ENCODE measurements at regions of chr19 and their contacts with region 1.

Region 1: DNA sequence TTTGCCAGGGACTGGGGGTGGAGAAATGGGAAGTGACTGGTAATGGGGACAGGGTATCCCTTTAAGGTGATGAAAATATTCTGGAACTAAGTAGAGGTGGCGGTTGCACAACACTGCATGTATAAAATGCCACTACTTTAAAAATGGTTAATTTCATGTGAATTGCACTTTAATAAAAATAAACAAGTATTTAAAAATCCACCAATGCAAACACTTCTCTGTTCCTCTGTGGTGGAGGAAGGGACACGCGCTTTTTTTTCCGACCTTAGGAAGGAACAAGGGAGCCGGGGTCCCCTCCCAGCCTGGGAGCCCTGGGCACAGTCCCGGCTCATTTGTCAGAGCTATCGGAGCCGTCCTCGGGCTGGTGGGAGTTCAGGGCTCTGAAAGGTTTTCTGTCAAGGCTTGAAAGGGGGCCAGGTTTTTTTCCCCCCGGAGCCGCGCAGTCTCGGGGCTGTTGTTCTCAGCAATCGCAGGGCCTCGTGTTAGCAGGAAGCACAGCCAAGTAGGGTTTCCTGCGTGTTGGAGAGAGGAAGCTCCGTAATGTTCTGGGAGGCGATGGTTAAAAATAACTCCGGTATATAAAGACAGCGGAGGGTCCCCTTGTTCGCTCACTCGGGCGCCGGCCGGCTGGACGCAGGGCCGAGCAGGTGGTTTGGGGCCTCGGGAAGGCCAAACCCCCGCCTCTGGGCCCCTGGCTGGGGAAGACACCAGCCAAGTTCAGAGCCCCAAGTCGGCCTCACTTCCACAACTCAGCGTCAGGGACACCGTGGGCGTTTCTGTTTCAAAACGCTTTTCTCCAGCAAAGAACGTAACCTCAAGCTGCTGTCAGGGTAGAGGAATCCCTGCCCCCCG is 41.2 kb upstream of the KLF2 start:
- DNase-seq: no peak
- H3K4me3 ChIP-seq: no peak overlapping the region
- H3K27ac ChIP-seq: no peak overlapping the region
- H3K4me1 ChIP-seq: peaks cover 5% of the 10 kb centered on the region
- H3K27me3 ChIP-seq: peaks cover 35% of the 10 kb centered on the region
- CTCF ChIP-seq: no peak

Region 2: DNA sequence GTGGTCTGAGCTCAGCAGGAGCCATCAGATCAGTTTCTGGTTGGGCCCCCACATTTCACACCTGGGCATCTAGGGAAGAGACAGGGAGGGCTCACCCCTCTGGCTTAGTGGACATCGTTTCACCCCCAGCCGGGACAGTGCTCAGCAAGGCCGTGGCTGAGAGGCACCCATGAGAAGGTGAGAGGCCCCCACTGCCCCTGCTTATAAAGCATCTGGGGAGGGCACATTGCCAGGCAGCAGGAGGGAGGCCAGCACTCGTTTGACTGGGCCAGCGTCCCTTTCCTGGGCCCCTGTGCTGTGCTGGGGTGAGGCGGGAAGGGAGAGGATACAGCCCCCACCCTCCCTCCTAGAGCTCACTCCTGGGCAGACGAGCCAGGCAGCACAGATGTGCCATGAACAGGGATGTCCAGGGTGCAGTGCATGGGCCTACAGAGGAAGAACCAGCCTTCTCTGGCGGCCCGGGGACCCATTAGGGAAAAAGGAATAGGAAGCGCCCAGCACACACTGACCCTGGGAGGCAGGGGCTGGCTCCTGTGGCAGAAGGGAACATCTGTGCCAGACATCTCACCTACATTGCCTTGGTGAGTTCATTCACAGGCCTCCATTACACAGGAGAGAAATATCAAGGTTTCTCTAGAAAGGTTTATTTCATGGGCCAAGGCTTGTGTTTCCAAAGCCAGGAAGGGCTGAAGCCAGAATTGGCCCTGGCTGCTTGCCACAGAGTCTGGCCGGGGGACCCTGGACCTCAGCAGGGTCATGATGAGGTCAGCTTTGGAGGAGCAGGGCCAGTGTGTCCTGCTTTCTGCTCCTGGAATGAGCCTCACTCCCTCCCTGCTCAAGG is 78.0 kb before region 1 on chr19:
- CTCF ChIA-PET with region 1: no interaction called
- dilution Hi-C with region 1: loop called (anchors 5 kb)
- in situ Hi-C with region 1: no loop called
- intact Hi-C with region 1: no loop called
- DNase-seq: no peak
- H3K4me3 ChIP-seq: no peak overlapping the region
- H3K27ac ChIP-seq: no peak overlapping the region
- H3K4me1 ChIP-seq: peaks cover 1% of the 10 kb centered on the region
- H3K27me3 ChIP-seq: no peaks in the 10 kb centered on the region
- CTCF ChIP-seq: no peak

Region 3: GRCh38 chr19:16315825-16316505 is 32.5 kb after region 1 on chr19:
- CTCF ChIA-PET with region 1: no interaction called
- dilution Hi-C with region 1: loop called (anchors 5 kb)
- in situ Hi-C with region 1: no loop called
- intact Hi-C with region 1: loop called (anchors 5 kb)
- DNase-seq: peak; percentile 74
- H3K4me3 ChIP-seq: no peak overlapping the region
- H3K27ac ChIP-seq: no peak overlapping the region
- H3K4me1 ChIP-seq: no peaks in the 10 kb centered on the region
- H3K27me3 ChIP-seq: no peaks in the 10 kb centered on the region
- CTCF ChIP-seq: no peak

Region 4: DNA sequence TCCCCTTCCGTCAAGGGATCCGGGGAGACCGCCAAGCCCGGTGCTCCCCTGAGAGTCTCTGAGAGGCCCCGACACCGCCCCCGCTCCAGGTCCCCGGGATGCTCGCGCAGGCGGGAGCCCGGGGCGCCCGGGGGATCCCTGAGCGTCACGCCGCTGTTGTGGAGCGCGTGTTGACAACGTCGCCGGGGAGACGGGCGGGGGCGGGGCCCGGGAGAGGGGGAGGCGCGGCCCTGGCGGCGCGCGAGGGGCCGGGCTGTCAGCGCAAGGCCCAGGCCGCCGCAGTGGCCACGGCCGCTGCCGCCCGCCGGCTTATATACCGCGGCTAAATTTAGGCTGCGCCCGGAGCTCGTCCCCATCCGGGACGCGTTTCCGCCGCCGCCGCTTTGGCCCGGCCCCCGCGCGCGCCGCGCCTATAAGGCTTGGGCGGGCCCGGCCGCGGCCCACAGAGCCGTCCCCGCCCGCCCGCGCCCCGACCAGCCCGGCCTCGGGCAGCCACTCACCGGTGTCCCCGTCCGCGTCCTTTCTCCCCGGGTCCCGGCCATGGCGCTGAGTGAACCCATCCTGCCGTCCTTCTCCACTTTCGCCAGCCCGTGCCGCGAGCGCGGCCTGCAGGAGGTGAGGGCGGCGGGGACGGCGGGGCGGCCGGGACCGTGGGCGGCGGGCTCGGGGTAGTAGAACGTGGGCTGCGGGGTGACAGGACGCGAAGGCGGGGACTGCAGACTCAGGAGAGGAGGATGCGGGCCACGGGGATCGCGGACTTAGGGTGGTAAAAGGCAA is 41.1 kb after region 1 on chr19 and contains the start of gene KLF2:
- CTCF ChIA-PET with region 1: no interaction called
- dilution Hi-C with region 1: loop called (anchors 5 kb)
- in situ Hi-C with region 1: no loop called
- intact Hi-C with region 1: loop called (anchors 5 kb)
- DNase-seq: peak; percentile 84
- H3K4me3 ChIP-seq: peak within 1 kb of the TSS; percentile 53 to 65 (median 58)
- H3K27ac ChIP-seq: peak within 1 kb of the TSS; percentile 63
- H3K4me1 ChIP-seq: peaks cover 2% of the 10 kb centered on the region
- H3K27me3 ChIP-seq: no peaks in the 10 kb centered on the region
- CTCF ChIP-seq: no peak
- total RNA-seq, gene KLF2: 0.99 TPM in 1 of 2 donors, not detected in the other

Region 5: GRCh38 chr19:16330368-16330801 is 46.9 kb after region 1 on chr19:
- CTCF ChIA-PET with region 1: no interaction called
- dilution Hi-C with region 1: no loop called
- in situ Hi-C with region 1: no loop called
- intact Hi-C with region 1: loop called (anchors 5 kb)
- DNase-seq: peak; percentile 96
- H3K4me3 ChIP-seq: no peak overlapping the region
- H3K27ac ChIP-seq: no peak overlapping the region
- H3K4me1 ChIP-seq: peaks cover 4% of the 10 kb centered on the region
- H3K27me3 ChIP-seq: no peaks in the 10 kb centered on the region
- CTCF ChIP-seq: no peak

Region 6: DNA sequence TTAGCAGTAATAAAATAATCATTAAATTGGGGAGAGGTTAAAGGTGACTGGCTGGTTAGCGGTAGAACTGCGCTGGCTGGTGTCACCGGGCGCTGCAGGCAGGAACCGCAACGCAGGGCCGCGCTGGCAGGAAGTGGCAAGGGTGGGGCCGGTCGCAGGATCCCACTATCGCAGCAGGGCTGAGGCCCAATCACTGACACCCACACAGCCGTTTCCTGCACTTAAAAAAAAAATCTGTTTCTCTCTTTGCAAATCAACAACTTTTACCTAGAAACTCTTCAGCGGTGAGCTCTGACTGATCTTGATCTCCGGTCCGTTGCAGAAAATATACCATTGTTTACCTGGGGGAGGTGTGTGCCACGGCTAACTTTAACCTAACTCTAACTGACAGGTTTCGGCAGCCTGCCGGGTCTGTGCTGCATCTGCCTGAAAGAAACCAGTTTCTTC is 88.1 kb after region 1 on chr19:
- CTCF ChIA-PET with region 1: no interaction called
- dilution Hi-C with region 1: loop called (anchors 5 kb)
- in situ Hi-C with region 1: no loop called
- intact Hi-C with region 1: no loop called
- DNase-seq: no peak
- H3K4me3 ChIP-seq: no peak overlapping the region
- H3K27ac ChIP-seq: no peak overlapping the region
- H3K4me1 ChIP-seq: no peaks in the 10 kb centered on the region
- H3K27me3 ChIP-seq: no peaks in the 10 kb centered on the region
- CTCF ChIP-seq: no peak

Region 7: GRCh38 chr19:16446724-16447368 is 163.4 kb after region 1 on chr19:
- CTCF ChIA-PET with region 1: no interaction called
- dilution Hi-C with region 1: loop called (anchors 10 kb)
- in situ Hi-C with region 1: no loop called
- intact Hi-C with region 1: no loop called
- DNase-seq: peak; percentile 70
- H3K4me3 ChIP-seq: no peak overlapping the region
- H3K27ac ChIP-seq: no peak overlapping the region
- H3K4me1 ChIP-seq: peaks cover 11% of the 10 kb centered on the region
- H3K27me3 ChIP-seq: no peaks in the 10 kb centered on the region
- CTCF ChIP-seq: no peak

Region 8: GRCh38 chr19:16542045-16542909 is 258.8 kb after region 1 on chr19 and contains the start of gene CHERP:
- CTCF ChIA-PET with region 1: no interaction called
- dilution Hi-C with region 1: no loop called
- in situ Hi-C with region 1: no loop called
- intact Hi-C with region 1: no loop called
- DNase-seq: peak; percentile 90
- H3K4me3 ChIP-seq: peak within 1 kb of the TSS; percentile 73 to 96 (median 88)
- H3K27ac ChIP-seq: peak within 1 kb of the TSS; percentile 78
- H3K4me1 ChIP-seq: peaks cover 6% of the 10 kb centered on the region
- H3K27me3 ChIP-seq: no peaks in the 10 kb centered on the region
- CTCF ChIP-seq: no peak
- total RNA-seq, gene CHERP: 5.7 to 49.6 TPM